MCF 10A (cell line): ENCODE measurements at regions of chr1 and their contacts with region 1.

Region 1: DNA sequence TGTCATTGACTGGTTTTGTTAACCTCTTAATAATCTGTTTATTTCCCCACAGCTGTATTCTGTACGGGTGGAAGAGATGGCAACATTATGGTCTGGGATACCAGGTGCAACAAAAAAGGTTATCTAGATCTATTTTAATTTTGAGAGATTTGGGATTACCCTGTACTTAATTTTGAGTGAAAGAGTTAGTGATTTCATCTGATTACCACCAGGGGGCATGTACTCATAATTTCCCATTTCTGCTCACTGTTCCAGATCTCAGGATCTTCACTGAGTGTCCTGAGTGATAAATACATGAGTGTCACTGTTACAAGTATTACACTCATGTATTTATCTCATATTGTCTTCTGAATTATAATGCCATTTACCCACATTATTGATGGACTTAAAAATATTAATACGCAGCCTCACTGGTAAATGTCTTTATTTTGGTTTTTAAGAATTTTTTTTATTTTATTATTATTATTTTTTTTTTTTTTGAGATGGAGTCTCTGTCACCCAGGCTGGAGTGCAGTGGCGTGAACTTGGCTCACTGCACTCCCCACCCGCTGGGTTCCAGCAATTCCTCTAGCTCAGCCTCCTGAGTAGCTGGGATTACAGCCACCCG is 27.4 kb downstream of the DTL start:
- DNase-seq: peak; percentile 73
- H3K4me3 Mint-ChIP-seq: no peak overlapping the region
- H3K27ac Mint-ChIP-seq: no peak overlapping the region
- H3K4me1 Mint-ChIP-seq: peaks cover 12% of the 10 kb centered on the region
- H3K27me3 Mint-ChIP-seq: no peaks in the 10 kb centered on the region
- CTCF ChIP-seq: peak; percentile 84

Region 2: DNA sequence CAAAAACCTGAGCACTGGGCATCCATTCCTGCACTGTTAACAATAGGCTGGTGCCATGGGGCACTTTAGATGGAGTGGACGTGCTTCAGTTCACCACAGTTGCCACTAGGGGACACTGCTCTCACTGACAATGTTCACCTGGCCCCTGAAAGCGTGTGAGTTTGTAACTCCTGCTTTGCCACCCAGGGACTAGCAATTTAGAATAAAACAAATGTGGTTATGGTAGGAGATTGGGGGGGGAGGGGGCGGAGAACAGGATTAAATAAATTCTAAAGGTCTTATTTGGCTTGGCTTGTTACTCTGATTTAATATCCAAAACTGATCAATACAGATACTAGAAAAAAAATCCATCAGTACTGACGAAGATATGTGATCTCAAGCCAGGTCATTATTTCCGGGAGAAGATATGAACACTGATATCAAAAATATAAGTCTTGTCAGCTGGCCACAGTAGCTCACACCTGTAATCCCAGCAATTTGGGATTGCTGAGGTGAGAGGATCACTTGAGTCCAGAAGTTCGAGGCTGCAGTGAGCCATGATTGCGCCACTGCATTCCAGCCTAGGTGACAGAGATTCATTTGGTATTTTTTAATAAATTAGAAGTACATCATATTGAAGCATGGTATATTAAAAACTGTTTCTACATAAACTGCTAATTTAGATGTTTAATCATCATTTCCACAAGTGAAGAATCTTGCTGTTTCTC is 50.7 kb before region 1 on chr1:
- CTCF ChIA-PET with region 1: interaction called, 29 read pairs
- POLR2A ChIA-PET with region 1: no interaction called
- intact Hi-C with region 1: loop called (anchors 1 kb)
- DNase-seq: peak; percentile 95
- H3K4me3 Mint-ChIP-seq: no peak overlapping the region
- H3K27ac Mint-ChIP-seq: no peak overlapping the region
- H3K4me1 Mint-ChIP-seq: no peaks in the 10 kb centered on the region
- H3K27me3 Mint-ChIP-seq: no peaks in the 10 kb centered on the region
- CTCF ChIP-seq: peak; percentile 100

Region 3: GRCh38 chr1:212045981-212046380 is 17.0 kb before region 1 on chr1:
- CTCF ChIA-PET with region 1: interaction called, 68 read pairs
- POLR2A ChIA-PET with region 1: interaction called, 4 read pairs
- intact Hi-C with region 1: no loop called
- DNase-seq: no peak
- H3K4me3 Mint-ChIP-seq: no peak overlapping the region
- H3K27ac Mint-ChIP-seq: no peak overlapping the region
- H3K4me1 Mint-ChIP-seq: peaks cover 23% of the 10 kb centered on the region
- H3K27me3 Mint-ChIP-seq: no peaks in the 10 kb centered on the region
- CTCF ChIP-seq: no peak

Region 4: GRCh38 chr1:212291505-212292134 is 228.7 kb after region 1 on chr1:
- CTCF ChIA-PET with region 1: interaction called, 55 read pairs
- POLR2A ChIA-PET with region 1: interaction called, 6 read pairs
- intact Hi-C with region 1: no loop called
- DNase-seq: peak; percentile 85
- H3K4me3 Mint-ChIP-seq: no peak overlapping the region
- H3K27ac Mint-ChIP-seq: peak overlapping the region; percentile 25
- H3K4me1 Mint-ChIP-seq: peaks cover 54% of the 10 kb centered on the region
- H3K27me3 Mint-ChIP-seq: no peaks in the 10 kb centered on the region
- CTCF ChIP-seq: peak; percentile 80

Region 5: DNA sequence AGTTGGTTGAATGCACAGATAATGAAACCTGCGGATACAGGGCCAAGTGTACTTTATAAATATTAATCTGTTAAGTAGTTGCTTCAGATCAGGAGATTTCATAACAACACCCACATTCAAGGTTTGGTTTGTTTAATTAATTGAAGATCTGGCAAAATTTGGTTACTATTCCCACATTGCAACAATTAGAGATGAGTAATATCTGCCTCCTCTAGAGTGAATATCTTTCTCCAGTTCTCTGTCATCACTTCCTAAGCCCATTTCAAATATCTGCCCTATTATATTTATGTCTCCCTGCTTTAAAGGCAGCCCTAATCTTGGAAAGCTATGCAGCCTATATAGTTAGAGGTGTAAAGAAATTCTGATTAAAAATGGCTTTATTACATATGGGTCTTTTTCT is 283.7 kb after region 1 on chr1:
- CTCF ChIA-PET with region 1: interaction called, 21 read pairs
- POLR2A ChIA-PET with region 1: interaction called, 4 read pairs
- intact Hi-C with region 1: no loop called
- DNase-seq: no peak
- H3K4me3 Mint-ChIP-seq: no peak overlapping the region
- H3K27ac Mint-ChIP-seq: no peak overlapping the region
- H3K4me1 Mint-ChIP-seq: no peaks in the 10 kb centered on the region
- H3K27me3 Mint-ChIP-seq: no peaks in the 10 kb centered on the region
- CTCF ChIP-seq: no peak

Region 6: GRCh38 chr1:212368073-212368484 is 305.1 kb after region 1 on chr1:
- CTCF ChIA-PET with region 1: interaction called, 113 read pairs
- POLR2A ChIA-PET with region 1: interaction called, 8 read pairs
- intact Hi-C with region 1: loop called (anchors 1 kb)
- DNase-seq: peak; percentile 93
- H3K4me3 Mint-ChIP-seq: no peak overlapping the region
- H3K27ac Mint-ChIP-seq: peak overlapping the region; percentile 5
- H3K4me1 Mint-ChIP-seq: peaks cover 15% of the 10 kb centered on the region
- H3K27me3 Mint-ChIP-seq: no peaks in the 10 kb centered on the region
- CTCF ChIP-seq: peak; percentile 99

Region 7: GRCh38 chr1:212381397-212382035 is 318.6 kb after region 1 on chr1:
- CTCF ChIA-PET with region 1: interaction called, 20 read pairs
- POLR2A ChIA-PET with region 1: no interaction called
- intact Hi-C with region 1: no loop called
- DNase-seq: no peak
- H3K4me3 Mint-ChIP-seq: no peak overlapping the region
- H3K27ac Mint-ChIP-seq: no peak overlapping the region
- H3K4me1 Mint-ChIP-seq: no peaks in the 10 kb centered on the region
- H3K27me3 Mint-ChIP-seq: no peaks in the 10 kb centered on the region
- CTCF ChIP-seq: no peak